Thyroid gland (tissue), 4 donors: ENCODE measurements at regions of chr7 and their contacts with region 1.

Region 1: GRCh38 chr7:129423700-129424618 is 10.3 kb upstream of the STRIP2 start:
- DNase-seq: no peak
- H3K4me3 ChIP-seq: no peak overlapping the region
- H3K27ac ChIP-seq: no peak overlapping the region
- H3K4me1 ChIP-seq: peaks cover 0 to 4% of the 10 kb centered on the region in 2 donors
- H3K27me3 ChIP-seq: no peaks in the 10 kb centered on the region
- CTCF ChIP-seq: no peak
- POLR2A ChIP-seq: no peak

Region 2: DNA sequence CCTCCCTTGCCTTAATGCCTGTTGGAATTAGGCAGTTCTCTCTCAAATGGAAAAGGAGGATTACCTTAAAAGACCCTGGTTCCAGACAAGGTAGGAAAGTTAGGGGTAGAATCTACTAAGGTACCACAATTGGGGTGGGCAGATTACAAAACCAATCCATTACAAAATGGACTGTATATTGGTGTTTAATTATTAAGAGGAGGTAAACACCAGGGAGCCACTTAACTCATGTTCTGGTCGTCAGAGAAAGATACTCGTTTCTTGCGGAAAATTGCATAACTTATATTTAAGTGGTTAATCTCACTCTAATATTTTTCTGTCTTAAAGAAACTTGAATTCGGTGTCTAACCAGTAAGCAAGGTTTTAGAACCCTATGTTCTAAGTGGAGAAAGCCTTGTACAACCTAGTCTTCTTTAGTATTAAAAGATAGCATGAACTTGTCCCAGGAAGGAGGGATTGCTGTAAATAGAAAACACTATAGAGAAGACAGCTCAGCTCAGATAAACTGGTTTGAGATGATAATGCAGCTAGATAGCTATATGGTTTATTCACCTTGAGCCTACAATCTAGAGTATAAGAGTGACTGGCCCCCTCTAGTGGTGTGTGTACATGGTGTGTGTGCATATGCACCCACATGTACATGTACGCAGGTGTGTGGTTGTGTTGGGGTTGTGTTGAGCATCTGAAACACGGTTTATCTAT is 47.7 kb before region 1 on chr7:
- intact Hi-C with region 1: loop called (anchors 10 kb)
- DNase-seq: peak in 1 of 2 donors; percentile 16
- H3K4me3 ChIP-seq: no peak overlapping the region
- H3K27ac ChIP-seq: no peak overlapping the region
- H3K4me1 ChIP-seq: peaks cover under 1 to 4% of the 10 kb centered on the region in 2 donors
- H3K27me3 ChIP-seq: no peaks in the 10 kb centered on the region
- CTCF ChIP-seq: peak in 4 of 6 experiments; percentile 19 to 44 (median 26)
- POLR2A ChIP-seq: no peak